Naive thymus-derived CD4-positive, alpha-beta T cell (primary cell): ENCODE measurements at regions of chr10 and their contacts with region 1.

Region 1: GRCh38 chr10:12369982-12370381 is 20.6 kb downstream of the CAMK1D start:
- DNase-seq: no peak
- ATAC-seq: no peak
- H3K4me3 ChIP-seq: no peak overlapping the region
- H3K4me3 Mint-ChIP-seq: no peak overlapping the region
- H3K27ac ChIP-seq: no peak overlapping the region
- H3K27ac Mint-ChIP-seq: no peak overlapping the region
- H3K4me1 ChIP-seq: peaks cover 9 to 14% of the 10 kb centered on the region in 2 donors
- H3K4me1 Mint-ChIP-seq: peaks cover 13 to 40% (median 27%) of the 10 kb centered on the region in 7 donors
- H3K27me3 ChIP-seq: no peaks in the 10 kb centered on the region
- H3K27me3 Mint-ChIP-seq: no peaks in the 10 kb centered on the region

Region 2: DNA sequence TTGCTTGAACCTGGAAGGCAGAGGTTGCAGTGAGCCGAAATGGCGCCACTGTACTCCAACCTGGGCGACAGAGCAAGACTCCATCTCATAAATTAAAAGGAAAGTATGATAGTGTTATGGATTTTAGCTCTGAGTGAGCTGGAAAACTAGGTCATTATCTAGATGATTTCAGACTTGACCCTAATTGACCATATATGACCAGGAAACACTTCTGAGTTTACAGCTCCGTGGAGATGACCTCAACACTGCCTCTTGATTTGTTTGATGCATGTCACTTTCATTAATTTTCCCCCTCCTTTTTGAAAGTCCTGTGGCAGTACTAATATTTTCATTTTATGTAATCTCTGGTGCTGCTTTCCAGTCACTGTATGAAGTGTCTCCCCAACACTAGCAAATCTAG is 248.3 kb before region 1 on chr10:
- CTCF ChIA-PET with region 1: no interaction called
- POLR2A ChIA-PET with region 1: no interaction called
- intact Hi-C with region 1: loop called in 1 of 2 experiments (anchors 5 kb)
- DNase-seq: no peak
- ATAC-seq: no peak
- H3K4me3 ChIP-seq: no peak overlapping the region
- H3K4me3 Mint-ChIP-seq: no peak overlapping the region
- H3K27ac ChIP-seq: no peak overlapping the region
- H3K27ac Mint-ChIP-seq: peak overlapping the region in 1 of 9 donors; percentile 86
- H3K4me1 ChIP-seq: no peaks in the 10 kb centered on the region
- H3K4me1 Mint-ChIP-seq: peaks cover 1 to 31% (median 7%) of the 10 kb centered on the region in 7 donors
- H3K27me3 ChIP-seq: no peaks in the 10 kb centered on the region
- H3K27me3 Mint-ChIP-seq: no peaks in the 10 kb centered on the region

Region 3: GRCh38 chr10:12400266-12400931 is 30.4 kb after region 1 on chr10:
- CTCF ChIA-PET with region 1: no interaction called
- POLR2A ChIA-PET with region 1: no interaction called
- intact Hi-C with region 1: loop called in 1 of 2 experiments (anchors 1 kb)
- DNase-seq: peak in 1 of 9 donors; percentile 1
- ATAC-seq: no peak
- H3K4me3 ChIP-seq: no peak overlapping the region
- H3K4me3 Mint-ChIP-seq: no peak overlapping the region
- H3K27ac ChIP-seq: no peak overlapping the region
- H3K27ac Mint-ChIP-seq: no peak overlapping the region
- H3K4me1 ChIP-seq: no peaks in the 10 kb centered on the region
- H3K4me1 Mint-ChIP-seq: peaks cover 11 to 33% (median 17%) of the 10 kb centered on the region in 7 donors
- H3K27me3 ChIP-seq: no peaks in the 10 kb centered on the region
- H3K27me3 Mint-ChIP-seq: no peaks in the 10 kb centered on the region

Region 4: DNA sequence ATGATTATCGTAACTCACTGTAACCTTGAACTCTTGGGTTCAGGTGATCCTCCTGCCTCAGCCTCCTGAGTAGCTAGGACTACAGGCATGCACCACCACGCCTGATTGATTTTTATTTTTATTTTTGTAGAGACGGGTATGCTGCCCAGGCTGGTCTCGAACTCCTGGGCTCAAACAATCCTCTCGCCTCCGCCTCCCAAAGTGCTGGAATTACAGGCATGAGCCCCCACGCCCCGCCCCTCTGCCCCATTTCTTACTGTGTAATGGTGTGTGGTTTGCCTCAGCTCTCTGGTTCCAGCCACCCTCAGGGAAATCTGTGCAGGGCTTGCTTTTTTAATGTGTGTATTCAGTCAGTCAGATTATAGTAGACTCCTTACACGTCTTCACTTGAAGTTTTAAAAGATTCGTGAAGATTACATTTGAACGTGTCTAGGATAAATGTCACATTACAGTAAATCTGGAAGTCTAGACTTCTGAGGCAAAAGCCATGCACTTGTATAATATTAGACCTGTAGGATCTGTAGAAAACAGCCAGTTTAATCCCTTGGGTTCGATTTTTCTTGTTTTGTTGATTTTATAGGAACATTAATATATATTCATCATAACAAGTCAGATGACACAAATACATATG is 255.5 kb after region 1 on chr10:
- CTCF ChIA-PET with region 1: no interaction called
- POLR2A ChIA-PET with region 1: no interaction called
- intact Hi-C with region 1: no loop called
- DNase-seq: no peak
- ATAC-seq: no peak
- H3K4me3 ChIP-seq: no peak overlapping the region
- H3K4me3 Mint-ChIP-seq: no peak overlapping the region
- H3K27ac ChIP-seq: no peak overlapping the region
- H3K27ac Mint-ChIP-seq: no peak overlapping the region
- H3K4me1 ChIP-seq: no peaks in the 10 kb centered on the region
- H3K4me1 Mint-ChIP-seq: peaks cover 12 to 39% (median 30%) of the 10 kb centered on the region in 7 donors
- H3K27me3 ChIP-seq: no peaks in the 10 kb centered on the region
- H3K27me3 Mint-ChIP-seq: peaks cover 0 to 2% (median 0%) of the 10 kb centered on the region in 5 donors

Region 5: DNA sequence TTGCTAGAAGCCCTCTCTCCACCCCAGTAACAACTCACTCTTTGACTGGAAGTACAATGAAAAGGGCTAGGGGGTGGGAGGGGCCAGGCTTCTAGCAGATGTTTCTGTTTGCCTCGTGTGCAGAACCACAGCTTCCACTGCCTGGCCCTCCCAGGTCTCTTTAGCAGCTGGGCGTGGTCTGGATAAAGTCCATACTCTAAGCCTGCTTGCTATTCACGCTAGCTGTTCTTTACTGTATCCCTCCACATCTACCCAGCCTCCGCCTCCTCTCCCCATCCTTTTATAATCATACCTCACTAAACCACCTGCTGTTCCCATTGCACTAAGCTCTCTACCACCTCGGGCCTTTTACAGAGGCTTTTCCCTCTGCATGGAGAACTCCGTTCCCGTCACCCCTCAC is 268.1 kb after region 1 on chr10:
- CTCF ChIA-PET with region 1: no interaction called
- POLR2A ChIA-PET with region 1: no interaction called
- intact Hi-C with region 1: loop called in 1 of 2 experiments (anchors 5 kb)
- DNase-seq: peak in 1 of 9 donors; percentile 14
- ATAC-seq: no peak
- H3K4me3 ChIP-seq: no peak overlapping the region
- H3K4me3 Mint-ChIP-seq: peak overlapping the region in 8 of 10 donors; percentile 1 to 69 (median 24)
- H3K27ac ChIP-seq: no peak overlapping the region
- H3K27ac Mint-ChIP-seq: peak overlapping the region in 6 of 9 donors; percentile 16 to 90 (median 54)
- H3K4me1 ChIP-seq: peaks cover 0 to 20% of the 10 kb centered on the region in 2 donors
- H3K4me1 Mint-ChIP-seq: peaks cover 24 to 63% (median 51%) of the 10 kb centered on the region in 7 donors
- H3K27me3 ChIP-seq: no peaks in the 10 kb centered on the region
- H3K27me3 Mint-ChIP-seq: no peaks in the 10 kb centered on the region